Gastrocnemius medialis (tissue), 4 donors: ENCODE measurements at regions of chr2 and their contacts with region 1.

Region 1: DNA sequence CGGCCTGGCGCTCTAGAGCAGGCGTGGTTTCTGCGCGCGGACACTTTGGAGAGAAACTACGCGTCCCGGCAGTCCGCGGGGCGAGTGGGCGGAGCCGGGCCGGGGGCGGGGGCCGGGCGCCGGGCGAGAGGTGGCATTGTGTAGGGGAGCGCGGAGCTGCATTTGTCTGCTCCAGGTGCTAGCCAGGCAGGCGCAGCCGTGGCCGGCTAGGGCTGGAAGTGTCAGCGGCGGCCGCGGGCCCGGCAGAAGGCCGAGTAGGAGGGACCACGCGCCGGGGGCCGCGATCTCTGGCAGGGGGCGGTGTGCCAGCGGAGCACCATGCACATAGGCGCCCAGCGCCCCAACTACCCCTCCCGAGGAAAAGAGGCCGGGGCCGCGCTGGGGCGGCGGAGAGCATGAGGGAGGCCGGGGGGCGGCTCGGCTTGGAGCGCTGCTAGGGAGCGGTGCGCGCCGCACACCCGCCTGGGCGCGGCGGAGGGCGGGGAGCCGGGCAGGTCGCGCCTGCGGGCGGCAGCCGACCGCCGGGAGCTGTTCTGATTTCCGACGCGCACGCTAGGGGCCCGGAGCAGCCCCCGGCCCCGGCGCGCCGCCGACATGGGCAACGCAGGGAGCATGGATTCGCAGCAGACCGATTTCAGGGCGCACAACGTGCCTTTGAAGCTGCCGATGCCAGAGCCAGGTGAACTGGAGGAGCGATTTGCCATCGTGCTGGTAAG is at the start of gene FMNL2:
- DNase-seq: peak; percentile 84 to 86
- ATAC-seq: peak; percentile 85 to 86
- H3K4me3 ChIP-seq: peak within 1 kb of the TSS; percentile 67 to 96 (median 86)
- H3K27ac ChIP-seq: peak within 1 kb of the TSS; percentile 80 to 97 (median 96)
- H3K4me1 ChIP-seq: peaks cover 25 to 42% of the 10 kb centered on the region in 2 donors
- H3K27me3 ChIP-seq: no peaks in the 10 kb centered on the region
- CTCF ChIP-seq: peak in 2 of 5 experiments; percentile 4 to 13
- POLR2A ChIP-seq: peak; percentile 86 to 95
- total RNA-seq, gene FMNL2: 6.7 to 17.2 (median 11.5) TPM

Region 2: GRCh38 chr2:152189622-152190495 is 145.3 kb before region 1 on chr2:
- in situ Hi-C with region 1: loop called in 1 of 4 experiments (anchors 10 kb)
- intact Hi-C with region 1: no loop called
- DNase-seq: peak in 1 of 2 donors; percentile 26
- ATAC-seq: peak; percentile 80 to 88
- H3K4me3 ChIP-seq: no peak overlapping the region
- H3K27ac ChIP-seq: no peak overlapping the region
- H3K4me1 ChIP-seq: no peaks in the 10 kb centered on the region
- H3K27me3 ChIP-seq: no peaks in the 10 kb centered on the region
- CTCF ChIP-seq: peak; percentile 52 to 86 (median 84)
- POLR2A ChIP-seq: no peak

Region 3: GRCh38 chr2:152407204-152407721 is 72.1 kb after region 1 on chr2:
- in situ Hi-C with region 1: loop called in 1 of 4 experiments (anchors 10 kb)
- intact Hi-C with region 1: loop called (anchors 2 kb)
- DNase-seq: peak; percentile 55
- ATAC-seq: peak in 1 of 2 donors; percentile 44
- H3K4me3 ChIP-seq: peak overlapping the region; percentile 14 to 40 (median 24)
- H3K27ac ChIP-seq: peak overlapping the region; percentile 71 to 86 (median 80)
- H3K4me1 ChIP-seq: peaks cover 91 to 94% of the 10 kb centered on the region in 2 donors
- H3K27me3 ChIP-seq: no peaks in the 10 kb centered on the region
- CTCF ChIP-seq: no peak
- POLR2A ChIP-seq: peak in 1 of 2 donors; percentile 52

Region 4: GRCh38 chr2:152542995-152543481 is 207.9 kb after region 1 on chr2:
- in situ Hi-C with region 1: no loop called
- intact Hi-C with region 1: loop called (anchors 10 kb)
- DNase-seq: no peak
- ATAC-seq: peak in 1 of 2 donors; percentile 66
- H3K4me3 ChIP-seq: no peak overlapping the region
- H3K27ac ChIP-seq: peak overlapping the region; percentile 72 to 85 (median 80)
- H3K4me1 ChIP-seq: peaks cover 32 to 47% of the 10 kb centered on the region in 2 donors
- H3K27me3 ChIP-seq: no peaks in the 10 kb centered on the region
- CTCF ChIP-seq: no peak
- POLR2A ChIP-seq: no peak

Region 5: DNA sequence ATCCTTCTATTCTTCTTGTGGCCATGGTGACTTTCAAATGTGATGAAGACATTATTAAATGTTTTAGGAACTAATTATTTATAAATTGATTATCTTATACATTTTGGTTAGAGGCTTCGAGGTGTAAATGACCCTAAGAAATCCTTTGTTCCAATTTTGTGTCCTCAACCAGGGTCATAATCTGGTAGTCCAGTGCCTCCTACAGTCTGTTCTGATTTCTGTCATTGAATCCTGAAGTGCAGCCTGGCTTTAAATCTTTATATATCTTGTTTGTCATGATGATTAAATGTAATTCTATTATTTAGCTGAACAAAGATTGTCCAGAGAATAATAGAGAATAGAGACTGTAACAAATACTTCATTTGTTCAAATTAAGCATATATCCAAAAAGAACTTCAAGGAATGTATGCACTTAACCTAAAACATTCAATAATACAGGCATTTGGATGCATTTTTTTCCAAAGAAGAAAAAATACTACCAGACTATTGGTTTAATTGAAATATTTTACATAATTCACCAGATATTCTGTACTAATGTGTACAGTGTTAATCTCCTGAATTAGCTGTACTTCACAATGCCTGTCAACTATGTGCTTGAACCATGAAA is 292.3 kb after region 1 on chr2:
- in situ Hi-C with region 1: loop called (anchors 5 to 10 kb)
- intact Hi-C with region 1: loop called (anchors 2 kb)
- DNase-seq: no peak
- ATAC-seq: peak in 1 of 2 donors; percentile 87
- H3K4me3 ChIP-seq: no peak overlapping the region
- H3K27ac ChIP-seq: peak overlapping the region in 1 of 4 donors; percentile 10
- H3K4me1 ChIP-seq: peaks cover 2 to 4% of the 10 kb centered on the region in 2 donors
- H3K27me3 ChIP-seq: no peaks in the 10 kb centered on the region
- CTCF ChIP-seq: peak in 4 of 5 experiments; percentile 46 to 63 (median 57)
- POLR2A ChIP-seq: no peak